AG04450 (cell line): ENCODE measurements at regions of chr20 and their contacts with region 1.

Region 1: DNA sequence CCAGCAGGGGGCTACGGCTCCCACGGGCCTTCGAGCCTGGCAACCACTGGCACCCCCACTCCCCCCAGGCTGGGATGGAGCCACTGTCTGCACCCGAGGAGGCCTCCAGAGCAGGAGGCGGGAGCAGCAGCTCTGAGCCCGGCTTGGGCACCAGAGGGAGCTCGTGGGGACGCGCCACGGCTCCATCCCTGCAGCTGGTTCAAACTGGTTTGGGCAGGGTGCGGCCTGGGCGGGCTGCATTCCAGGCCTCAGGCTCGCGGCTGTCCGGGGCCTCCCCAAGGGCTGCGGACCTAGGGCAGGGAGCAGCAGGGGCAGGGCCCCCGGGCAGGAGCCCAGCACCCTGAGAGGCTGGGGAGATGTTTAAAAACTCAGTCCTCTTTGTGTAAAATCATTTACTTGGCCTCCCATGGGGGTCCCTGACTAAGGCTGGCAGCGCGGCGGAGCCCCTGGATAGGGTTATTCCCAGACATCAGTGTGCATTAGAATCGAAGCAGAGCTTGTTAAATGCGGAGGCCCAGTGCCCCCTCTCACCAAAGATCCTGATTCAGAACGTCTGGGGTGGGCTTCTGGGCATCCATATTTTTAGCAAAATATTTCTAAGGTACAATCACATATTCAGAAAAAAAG is 4.1 kb upstream of the BCAS4 start:
- DNase-seq: peak; percentile 76
- H3K4me3 ChIP-seq: no peak overlapping the region
- H3K27ac ChIP-seq: peak overlapping the region; percentile 75
- H3K27me3 ChIP-seq: no peaks in the 10 kb centered on the region
- CTCF ChIP-seq: peak; percentile 84

Region 2: DNA sequence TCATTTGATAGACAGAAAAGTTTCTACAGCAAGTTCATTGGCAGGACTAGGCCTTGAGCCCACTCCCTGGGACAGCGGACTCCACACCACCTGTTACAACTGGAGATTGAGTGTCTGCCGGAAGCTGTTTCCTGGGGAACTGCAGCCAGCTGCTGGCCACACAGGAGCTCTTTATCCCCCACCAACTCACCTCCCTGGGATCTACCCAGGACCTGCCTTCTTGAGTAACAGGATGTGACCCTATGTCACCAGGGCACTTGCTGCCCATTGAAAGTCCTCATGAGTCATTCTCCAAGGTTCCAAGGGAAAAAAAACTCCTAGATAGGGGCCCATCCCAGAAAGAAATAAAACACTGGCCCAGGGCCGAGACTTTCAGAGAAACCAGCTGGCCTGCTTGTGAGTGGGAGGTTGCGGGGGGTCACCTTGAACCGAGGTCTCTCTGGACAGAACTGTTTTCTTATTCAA is 1015.5 kb before region 1 on chr20:
- CTCF ChIA-PET with region 1: no interaction called
- POLR2A ChIA-PET with region 1: interaction called, 12 read pairs
- DNase-seq: no peak
- H3K4me3 ChIP-seq: no peak overlapping the region
- H3K27ac ChIP-seq: no peak overlapping the region
- H3K27me3 ChIP-seq: no peaks in the 10 kb centered on the region
- CTCF ChIP-seq: no peak

Region 3: GRCh38 chr20:50750145-50750671 is 40.6 kb before region 1 on chr20:
- CTCF ChIA-PET with region 1: interaction called, 43 read pairs
- POLR2A ChIA-PET with region 1: no interaction called
- DNase-seq: no peak
- H3K4me3 ChIP-seq: no peak overlapping the region
- H3K27ac ChIP-seq: no peak overlapping the region
- H3K27me3 ChIP-seq: no peaks in the 10 kb centered on the region
- CTCF ChIP-seq: no peak

Region 4: DNA sequence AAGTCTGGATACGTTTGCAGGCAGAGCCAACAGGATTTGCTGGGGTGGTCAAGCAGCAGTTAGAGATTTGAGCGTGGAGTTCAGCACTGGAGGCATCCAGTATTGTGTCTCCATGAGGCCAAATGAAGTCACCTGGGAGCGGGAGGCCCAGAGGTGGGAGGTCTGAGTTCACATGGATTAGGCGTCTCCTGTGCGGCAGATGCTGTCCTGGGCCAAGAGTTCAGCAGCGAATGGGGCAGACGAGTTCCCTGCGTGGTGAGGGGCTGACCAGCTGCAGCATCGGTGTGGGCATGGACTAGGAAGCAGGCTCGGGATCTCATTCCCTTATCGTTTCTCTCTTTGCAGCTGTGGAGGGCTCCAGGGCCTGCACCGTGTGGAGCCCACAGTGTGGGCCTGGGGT is 70.2 kb after region 1 on chr20:
- CTCF ChIA-PET with region 1: no interaction called
- POLR2A ChIA-PET with region 1: interaction called, 11 read pairs
- DNase-seq: no peak
- H3K4me3 ChIP-seq: no peak overlapping the region
- H3K27ac ChIP-seq: no peak overlapping the region
- H3K27me3 ChIP-seq: no peaks in the 10 kb centered on the region
- CTCF ChIP-seq: no peak

Region 5: DNA sequence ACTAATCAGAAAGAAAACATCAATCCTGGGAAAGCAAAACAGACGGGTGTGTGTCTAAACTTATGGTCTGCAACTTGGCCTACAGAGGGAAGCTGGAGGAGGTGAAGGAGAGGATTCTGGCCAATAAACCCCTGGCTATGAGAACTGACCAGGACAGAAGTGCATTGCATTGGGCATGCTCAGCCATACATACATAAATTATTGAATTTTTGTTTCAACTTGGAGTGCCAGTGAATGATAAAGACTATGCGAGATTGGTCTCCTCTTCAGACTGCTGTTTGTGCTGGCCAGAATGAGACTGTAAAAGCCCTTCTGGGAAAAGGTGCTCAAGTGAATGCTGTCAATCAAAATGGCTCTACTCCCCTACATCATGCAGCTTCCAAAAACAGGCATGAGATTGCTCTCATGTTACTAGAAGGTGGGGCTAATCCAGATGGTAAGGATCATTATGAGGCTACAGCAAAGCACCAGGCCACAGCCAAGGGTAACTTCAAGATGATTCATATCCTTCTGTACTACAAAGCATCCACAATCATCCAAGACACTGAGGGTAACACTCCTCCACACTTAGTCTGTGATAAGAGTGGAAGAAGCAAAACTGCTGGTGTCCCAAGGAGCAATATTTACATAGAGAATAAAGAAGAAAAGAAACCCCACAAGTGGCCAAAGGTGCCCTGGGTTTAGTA is 123.1 kb after region 1 on chr20:
- CTCF ChIA-PET with region 1: interaction called, 21 read pairs
- POLR2A ChIA-PET with region 1: interaction called, 3 read pairs
- DNase-seq: peak; percentile 51
- H3K4me3 ChIP-seq: no peak overlapping the region
- H3K27ac ChIP-seq: no peak overlapping the region
- H3K27me3 ChIP-seq: no peaks in the 10 kb centered on the region
- CTCF ChIP-seq: no peak

Region 6: DNA sequence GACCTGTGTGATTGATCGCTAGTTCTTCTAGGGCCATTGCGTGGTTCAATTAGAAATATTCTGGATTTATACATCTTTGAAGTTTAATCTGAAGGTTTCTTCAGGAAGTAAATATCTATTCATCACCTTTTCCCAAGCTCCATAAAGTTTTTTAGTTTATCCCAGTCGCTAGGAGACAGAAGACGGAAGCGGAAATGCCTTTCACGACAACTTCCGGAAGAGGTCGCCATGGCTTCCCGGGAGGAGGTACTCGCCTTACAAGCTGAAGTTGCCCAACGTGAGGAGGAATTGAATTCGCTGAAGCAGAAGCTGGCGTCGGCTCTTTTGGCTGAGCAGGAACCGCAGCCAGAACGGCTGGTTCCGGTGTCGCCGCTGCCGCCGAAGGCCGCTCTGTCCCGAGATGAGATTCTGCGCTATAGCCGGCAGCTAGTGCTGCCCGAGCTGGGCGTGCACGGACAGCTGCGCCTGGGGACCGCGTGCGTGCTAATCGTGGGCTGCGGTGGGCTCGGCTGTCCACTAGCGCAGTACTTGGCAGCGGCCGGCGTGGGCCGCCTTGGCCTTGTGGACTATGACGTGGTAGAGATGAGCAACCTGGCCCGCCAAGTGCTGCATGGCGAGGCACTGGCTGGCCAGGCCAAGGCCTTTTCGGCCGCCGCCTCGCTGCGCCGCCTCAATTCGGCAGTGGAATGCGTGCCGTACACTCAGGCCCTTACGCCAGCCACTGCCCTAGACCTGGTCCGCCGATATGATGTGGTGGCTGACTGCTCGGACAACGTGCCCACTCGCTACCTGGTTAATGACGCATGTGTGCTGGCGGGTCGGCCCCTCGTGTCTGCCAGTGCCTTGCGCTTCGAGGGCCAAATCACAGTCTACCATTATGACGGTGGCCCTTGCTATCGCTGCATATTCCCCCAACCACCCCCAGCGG is 168.1 kb after region 1 on chr20 and contains the start of gene MOCS3:
- CTCF ChIA-PET with region 1: interaction called, 27 read pairs
- POLR2A ChIA-PET with region 1: interaction called, 8 read pairs
- DNase-seq: peak; percentile 81
- H3K4me3 ChIP-seq: peak within 1 kb of the TSS; percentile 77
- H3K27ac ChIP-seq: peak within 1 kb of the TSS; percentile 79
- H3K27me3 ChIP-seq: no peaks in the 10 kb centered on the region
- CTCF ChIP-seq: no peak
- polyA plus RNA-seq, gene MOCS3: 3.8 and 4.0 TPM in 2 replicates